ENCODE measurements at regions of chr1 and their contacts with region 1.

Region 1: DNA sequence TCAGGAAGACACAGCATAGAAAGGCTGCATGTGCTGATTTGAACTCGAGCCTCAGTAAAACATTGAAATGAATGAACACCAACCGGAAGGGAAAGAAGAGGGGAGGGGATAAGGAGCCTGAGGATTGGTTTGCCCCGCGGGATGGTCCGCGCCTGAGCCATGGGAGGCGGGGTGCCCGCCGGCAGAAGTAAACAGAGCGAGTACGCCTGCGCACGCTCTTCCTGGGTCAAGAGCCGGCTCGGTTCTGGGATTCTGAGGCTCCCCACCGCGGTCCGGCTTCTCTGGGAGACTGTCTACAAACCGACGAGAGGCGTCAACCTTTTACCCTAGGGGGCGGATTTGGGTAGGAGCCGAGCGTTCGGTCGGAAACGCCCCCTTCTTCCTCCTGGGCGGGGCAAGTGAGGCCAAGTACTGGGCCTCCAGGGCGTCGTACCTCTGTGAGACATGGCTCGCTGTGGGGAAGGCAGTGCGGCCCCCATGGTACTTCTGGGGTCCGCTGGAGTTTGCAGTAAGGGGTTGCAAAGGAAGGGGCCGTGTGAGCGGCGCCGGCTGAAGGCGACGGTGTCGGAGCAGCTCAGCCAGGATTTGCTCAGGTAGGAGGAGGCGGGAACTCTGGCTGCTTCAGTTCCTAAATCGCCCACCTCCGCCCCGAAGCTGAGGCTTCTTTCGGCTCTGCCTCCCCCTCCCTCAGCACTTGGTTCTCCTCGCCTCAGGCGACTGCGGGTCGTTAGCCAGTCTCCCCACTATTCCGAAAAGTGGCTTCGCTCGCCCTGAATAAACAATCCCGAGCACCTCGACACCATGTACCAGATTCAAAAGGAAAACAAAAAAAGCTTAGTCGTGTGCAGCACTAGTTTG is at the start of gene BTBD8:
- DNase-seq: peak; percentile 67 to 87 (median 85)
- ATAC-seq: peak; percentile 98
- H3K4me3 ChIP-seq: peak within 1 kb of the TSS; percentile 79
- H3K4me3 Mint-ChIP-seq: peak within 1 kb of the TSS; percentile 87 to 99 (median 98)
- H3K27ac ChIP-seq: peak within 1 kb of the TSS; percentile 74
- H3K27ac Mint-ChIP-seq: peak within 1 kb of the TSS; percentile 85 to 97 (median 93)
- H3K4me1 ChIP-seq: peaks cover 0 to 3% of the 10 kb centered on the region in 2 donors
- H3K4me1 Mint-ChIP-seq: peaks cover 5 to 36% (median 29%) of the 10 kb centered on the region in 7 donors
- H3K27me3 ChIP-seq: no peaks in the 10 kb centered on the region
- H3K27me3 Mint-ChIP-seq: no peaks in the 10 kb centered on the region
- total RNA-seq, gene BTBD8: 2.4 to 11.4 (median 5.3) TPM

Region 2: DNA sequence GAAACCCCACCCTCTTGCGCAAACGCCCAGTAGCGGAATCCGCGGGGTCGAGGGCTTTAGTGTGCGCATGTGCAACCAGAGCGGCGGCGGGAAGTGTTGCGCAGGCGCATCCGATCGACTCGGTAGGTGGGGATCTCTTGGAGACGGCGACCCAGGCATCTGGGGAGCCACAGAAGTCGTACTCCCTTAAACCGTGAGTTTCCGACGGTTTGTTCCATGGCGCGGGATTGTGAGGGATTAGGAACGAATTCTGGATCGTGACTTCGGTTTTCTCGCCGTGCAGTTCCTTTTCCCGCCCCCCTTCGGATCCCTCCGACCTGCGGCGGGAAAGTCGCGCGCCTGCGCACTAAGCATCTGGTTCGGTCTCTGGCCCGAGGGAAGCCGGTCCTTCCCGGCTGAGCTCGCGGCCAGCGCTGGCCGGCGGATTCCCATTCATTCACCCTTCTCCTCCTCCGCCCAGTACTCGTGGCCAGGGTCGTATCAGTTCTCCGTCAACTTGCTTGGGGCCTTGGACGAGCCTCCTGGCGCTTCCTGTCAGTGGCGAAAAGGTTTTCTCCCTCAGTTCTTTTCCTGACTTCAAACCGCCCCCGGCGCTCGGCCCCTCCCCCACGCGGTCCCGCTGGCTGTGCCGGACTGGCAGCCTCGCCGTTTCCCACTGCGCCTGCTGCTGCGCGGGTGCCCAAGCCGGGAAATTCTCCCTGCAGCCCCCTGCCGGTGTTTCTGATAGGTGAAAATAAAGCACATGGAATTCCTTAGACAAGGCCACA is 579.4 kb before region 1 on chr1 and contains the start of gene CDC7:
- CTCF ChIA-PET with region 1: no interaction called
- POLR2A ChIA-PET with region 1: no interaction called
- intact Hi-C with region 1: loop called (anchors 5 kb)
- DNase-seq: peak; percentile 67 to 86 (median 79)
- ATAC-seq: peak; percentile 85
- H3K4me3 ChIP-seq: peak within 1 kb of the TSS; percentile 97
- H3K4me3 Mint-ChIP-seq: no peak within 1 kb of the TSS
- H3K27ac ChIP-seq: peak within 1 kb of the TSS; percentile 85
- H3K27ac Mint-ChIP-seq: no peak within 1 kb of the TSS
- H3K4me1 ChIP-seq: peaks cover 0 to 11% of the 10 kb centered on the region in 2 donors
- H3K4me1 Mint-ChIP-seq: peaks cover 14 to 34% (median 18%) of the 10 kb centered on the region in 7 donors
- H3K27me3 ChIP-seq: no peaks in the 10 kb centered on the region
- H3K27me3 Mint-ChIP-seq: no peaks in the 10 kb centered on the region
- total RNA-seq, gene CDC7: 5.3 to 17.9 (median 5.9) TPM

Region 3: GRCh38 chr1:92201973-92202372 is 121.6 kb after region 1 on chr1:
- CTCF ChIA-PET with region 1: no interaction called
- POLR2A ChIA-PET with region 1: interaction called, 3 read pairs
- intact Hi-C with region 1: loop called in 1 of 2 experiments (anchors 2 kb)
- DNase-seq: peak in 6 of 9 donors; percentile 13 to 38 (median 32)
- ATAC-seq: peak; percentile 24
- H3K4me3 ChIP-seq: no peak overlapping the region
- H3K4me3 Mint-ChIP-seq: peak overlapping the region in 9 of 10 donors; percentile 6 to 79 (median 44)
- H3K27ac ChIP-seq: peak overlapping the region; percentile 49
- H3K27ac Mint-ChIP-seq: peak overlapping the region; percentile 66 to 86 (median 78)
- H3K4me1 ChIP-seq: peaks cover 0 to 10% of the 10 kb centered on the region in 2 donors
- H3K4me1 Mint-ChIP-seq: peaks cover 9 to 29% (median 22%) of the 10 kb centered on the region in 7 donors
- H3K27me3 ChIP-seq: no peaks in the 10 kb centered on the region
- H3K27me3 Mint-ChIP-seq: no peaks in the 10 kb centered on the region

Region 4: DNA sequence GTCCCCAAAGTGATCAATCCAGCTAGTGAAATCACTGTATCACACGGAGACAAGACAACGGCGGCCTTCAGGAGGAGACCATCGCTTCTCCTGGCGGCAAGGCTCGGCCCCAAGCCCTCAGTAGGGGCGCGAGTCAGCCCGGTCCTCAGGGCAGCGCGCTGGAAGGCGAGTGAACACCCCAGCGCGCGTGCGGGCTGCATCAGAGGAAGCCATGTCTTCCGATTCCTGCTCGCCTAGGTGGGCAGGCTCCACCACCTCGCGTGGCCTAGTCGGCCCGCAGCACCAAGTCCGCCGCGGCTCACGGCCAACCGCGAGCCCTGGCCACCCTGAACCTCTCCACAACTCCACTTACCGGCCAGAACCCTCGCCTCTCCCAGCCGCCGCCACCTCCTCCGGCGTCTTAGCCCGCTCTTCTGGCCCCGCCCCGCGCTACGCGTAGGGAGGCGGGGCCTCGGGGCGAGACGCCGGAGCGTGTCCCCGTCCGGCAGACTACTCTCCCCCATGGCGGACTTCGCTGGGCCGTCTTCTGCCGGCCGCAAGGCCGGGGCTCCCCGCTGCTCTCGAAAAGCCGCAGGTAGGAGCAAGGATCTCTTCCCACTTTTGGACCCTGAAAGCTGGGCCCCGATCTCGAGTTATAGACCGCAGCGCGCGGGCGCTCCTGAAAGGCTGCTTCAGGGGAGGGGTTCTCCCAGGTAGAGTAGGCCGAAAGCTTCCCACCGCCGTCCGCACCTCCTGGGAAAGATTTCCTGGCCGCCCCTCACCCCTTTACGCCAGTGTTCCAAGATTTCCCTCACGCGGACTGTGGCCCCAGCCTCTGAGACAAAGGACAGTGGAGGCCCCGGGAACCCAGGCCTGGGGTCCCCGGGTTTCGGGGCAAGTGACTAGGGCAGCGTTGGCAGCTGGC is 218.5 kb after region 1 on chr1 and contains the starts of genes GLMN and RPAP2:
- CTCF ChIA-PET with region 1: no interaction called
- POLR2A ChIA-PET with region 1: interaction called, 4 read pairs
- intact Hi-C with region 1: loop called in 1 of 2 experiments (anchors 1 kb)
- DNase-seq: peak; percentile 55 to 86 (median 75)
- ATAC-seq: peak; percentile 97
- H3K4me3 ChIP-seq: peak within 1 kb of the TSS; percentile 93
- H3K4me3 Mint-ChIP-seq: peak within 1 kb of the TSS; percentile 93 to 99 (median 97)
- H3K27ac ChIP-seq: peak within 1 kb of the TSS; percentile 98
- H3K27ac Mint-ChIP-seq: peak within 1 kb of the TSS; percentile 91 to 99 (median 97)
- H3K4me1 ChIP-seq: peaks cover 10 to 19% of the 10 kb centered on the region in 2 donors
- H3K4me1 Mint-ChIP-seq: peaks cover 30 to 61% (median 48%) of the 10 kb centered on the region in 7 donors
- H3K27me3 ChIP-seq: no peaks in the 10 kb centered on the region
- H3K27me3 Mint-ChIP-seq: no peaks in the 10 kb centered on the region
- total RNA-seq, gene GLMN: 13.9 to 27.0 (median 14.3) TPM
- total RNA-seq, gene RPAP2: 29.5 to 50.7 (median 42.3) TPM

Region 5: DNA sequence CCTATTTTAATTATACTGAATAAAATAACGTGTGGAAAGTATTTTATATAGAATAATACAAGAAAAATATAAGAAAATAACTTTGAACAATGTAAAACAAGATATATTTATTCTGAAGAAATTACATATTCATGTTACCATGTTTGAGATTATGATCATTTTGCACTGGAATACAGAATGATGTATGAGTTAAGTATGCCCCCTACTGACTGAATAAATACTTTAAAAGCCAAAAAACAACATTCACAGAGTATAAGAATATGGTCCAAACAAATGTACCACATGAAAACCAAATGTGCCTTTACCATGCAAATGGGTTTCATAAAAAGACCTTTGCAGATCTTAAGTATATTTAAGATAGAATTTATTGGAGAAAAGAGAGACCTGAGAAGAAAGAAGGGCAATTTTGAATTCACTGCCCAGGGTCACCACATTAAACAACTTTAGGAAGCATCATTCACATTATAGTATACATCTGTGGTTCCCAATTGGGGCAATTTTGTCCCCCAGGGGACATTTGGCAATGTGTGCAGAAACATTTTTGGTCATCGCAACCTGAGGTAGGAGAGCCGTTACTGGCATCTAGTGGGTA is 542.9 kb after region 1 on chr1:
- CTCF ChIA-PET with region 1: no interaction called
- POLR2A ChIA-PET with region 1: no interaction called
- intact Hi-C with region 1: loop called in 1 of 2 experiments (anchors 5 kb)
- DNase-seq: peak in 6 of 9 donors; percentile 4 to 42 (median 35)
- ATAC-seq: peak; percentile 49
- H3K4me3 ChIP-seq: no peak overlapping the region
- H3K4me3 Mint-ChIP-seq: no peak overlapping the region
- H3K27ac ChIP-seq: no peak overlapping the region
- H3K27ac Mint-ChIP-seq: no peak overlapping the region
- H3K4me1 ChIP-seq: no peaks in the 10 kb centered on the region
- H3K4me1 Mint-ChIP-seq: no peaks in the 10 kb centered on the region
- H3K27me3 ChIP-seq: no peaks in the 10 kb centered on the region
- H3K27me3 Mint-ChIP-seq: peaks cover 0 to 4% (median 0%) of the 10 kb centered on the region in 5 donors

Measured in naive thymus-derived CD4-positive, alpha-beta T cell (primary cell).